GM12878 (cell line): ENCODE measurements at regions of chr1 and their contacts with region 1.

Region 1: DNA sequence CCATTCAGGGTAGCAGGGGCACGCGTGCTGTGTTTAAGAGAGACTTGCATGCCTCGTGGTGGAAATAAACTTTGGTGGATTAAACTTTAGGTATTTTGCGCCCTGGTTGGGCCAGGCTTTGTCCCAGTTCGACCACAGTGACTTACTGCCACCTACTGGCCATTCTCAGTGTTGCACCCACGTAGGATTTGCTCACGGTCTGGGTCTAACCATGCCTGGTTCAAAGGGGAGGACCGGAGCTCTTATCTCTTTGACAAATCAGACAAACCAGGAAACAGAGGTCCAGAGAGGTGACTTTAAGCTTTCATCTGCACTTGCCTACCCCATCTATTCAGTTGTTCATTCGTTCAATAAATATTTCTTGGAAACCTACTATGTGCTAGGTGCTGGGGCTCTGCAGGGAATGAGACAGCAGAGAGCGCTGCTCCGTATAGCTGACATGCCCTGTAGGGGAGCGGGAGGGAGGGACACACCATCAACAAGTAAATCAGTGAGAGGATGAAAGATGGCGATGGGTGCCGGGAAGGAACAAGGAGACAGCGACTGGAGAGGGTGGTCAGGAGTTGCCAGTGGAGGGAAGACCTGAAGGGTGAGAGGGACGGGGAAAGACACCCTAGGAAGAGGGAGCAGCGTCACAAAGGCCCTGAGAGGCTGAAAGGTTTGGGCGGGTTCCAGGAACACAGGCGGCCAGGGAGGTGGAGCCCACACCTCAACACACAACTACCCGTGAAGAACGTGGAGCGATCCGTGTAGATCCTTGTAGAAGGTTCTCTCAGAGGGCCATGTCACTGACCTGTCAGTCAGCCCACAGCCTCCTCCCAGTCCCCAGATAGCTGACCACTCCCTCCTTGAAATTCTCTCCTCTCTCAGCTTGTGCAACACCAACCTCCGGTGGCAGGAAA is 27.2 kb upstream of the TINAGL1 start:
- DNase-seq: peak; percentile 91
- ATAC-seq: peak; percentile 91
- H3K4me3 ChIP-seq: peak overlapping the region; percentile 23; the same call in 1 of the 2 replicates
- H3K27ac ChIP-seq: peak overlapping the region; percentile 33; the same call in 1 of the 2 replicates
- H3K4me1 ChIP-seq: peaks cover 14% of the 10 kb centered on the region
- H3K27me3 ChIP-seq: no peaks in the 10 kb centered on the region
- CTCF ChIP-seq: peak; percentile 80 to 98 (median 92)
- EP300 ChIP-seq: no peak
- POLR2A ChIP-seq: peak; percentile 38; the same call in 1 of the 2 replicates
- RAD21 ChIP-seq: peak; percentile 87

Region 2: DNA sequence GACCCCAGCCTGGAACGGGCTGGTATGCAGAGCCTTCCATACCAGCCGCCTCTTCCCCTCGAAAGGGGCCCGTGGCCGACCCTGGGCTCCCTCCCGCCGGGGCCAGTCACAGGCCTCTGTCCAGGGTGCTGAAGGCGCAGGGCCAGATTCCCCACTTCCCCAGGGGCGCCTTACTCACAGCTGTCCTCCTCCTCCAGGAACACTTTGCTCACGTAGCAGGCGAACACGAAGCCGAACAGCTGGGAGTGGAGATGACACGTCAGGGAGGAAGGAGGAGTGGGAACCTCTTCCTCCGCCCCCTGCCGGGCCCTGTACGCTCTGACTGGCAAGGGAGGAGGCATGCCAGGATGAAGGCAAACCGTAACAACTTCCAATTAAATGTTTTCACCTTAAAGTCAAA is 366.8 kb before region 1 on chr1:
- CTCF ChIA-PET with region 1: interaction called, 27 read pairs
- POLR2A ChIA-PET with region 1: no interaction called
- RAD21 ChIA-PET with region 1: interaction called, 21 read pairs
- SMC1A ChIA-PET with region 1: interaction called, 11 read pairs
- in situ Hi-C with region 1: no loop called
- intact Hi-C with region 1: loop called (anchors 2 kb)
- DNase-seq: no peak
- ATAC-seq: peak; percentile 75
- H3K4me3 ChIP-seq: no peak overlapping the region
- H3K27ac ChIP-seq: no peak overlapping the region
- H3K4me1 ChIP-seq: no peaks in the 10 kb centered on the region
- H3K27me3 ChIP-seq: no peaks in the 10 kb centered on the region; a peak in 3 of 4 replicates
- CTCF ChIP-seq: 0 out of 6 replicates have a peak, but pooled peaks of 1 of the 3 experiments have one; percentile 1
- EP300 ChIP-seq: no peak
- POLR2A ChIP-seq: no peak
- RAD21 ChIP-seq: no peak

Region 3: GRCh38 chr1:31422505-31423319 is 126.4 kb before region 1 on chr1:
- CTCF ChIA-PET with region 1: interaction called, 203 read pairs
- POLR2A ChIA-PET with region 1: interaction called, 16 read pairs
- RAD21 ChIA-PET with region 1: interaction called, 83 read pairs
- SMC1A ChIA-PET with region 1: interaction called, 135 read pairs
- in situ Hi-C with region 1: loop called (anchors 10 kb)
- intact Hi-C with region 1: loop called (anchors 1 kb)
- DNase-seq: peak; percentile 47
- ATAC-seq: peak; percentile 71
- H3K4me3 ChIP-seq: peak overlapping the region; percentile 29; the same call in 1 of the 2 replicates
- H3K27ac ChIP-seq: no peak overlapping the region
- H3K4me1 ChIP-seq: peaks cover 11% of the 10 kb centered on the region
- H3K27me3 ChIP-seq: no peaks in the 10 kb centered on the region
- CTCF ChIP-seq: peak; percentile 94 to 96 (median 95)
- EP300 ChIP-seq: no peak
- POLR2A ChIP-seq: no peak
- RAD21 ChIP-seq: peak; percentile 80

Region 4: GRCh38 chr1:31476891-31477828 is 72.0 kb before region 1 on chr1:
- CTCF ChIA-PET with region 1: interaction called, 19 read pairs
- POLR2A ChIA-PET with region 1: interaction called, 9 read pairs
- RAD21 ChIA-PET with region 1: interaction called, 19 read pairs
- SMC1A ChIA-PET with region 1: interaction called, 30 read pairs
- in situ Hi-C with region 1: no loop called
- intact Hi-C with region 1: loop called (anchors 2 kb)
- DNase-seq: peak; percentile 77
- ATAC-seq: peak; percentile 89
- H3K4me3 ChIP-seq: no peak overlapping the region
- H3K27ac ChIP-seq: no peak overlapping the region
- H3K4me1 ChIP-seq: no peaks in the 10 kb centered on the region
- H3K27me3 ChIP-seq: no peaks in the 10 kb centered on the region
- CTCF ChIP-seq: no peak
- EP300 ChIP-seq: 0 out of 4 replicates have a peak, but pooled peaks of 1 of the 2 experiments have one; percentile 23
- POLR2A ChIP-seq: no peak
- RAD21 ChIP-seq: no peak

Region 5: GRCh38 chr1:31531177-31531999 is 17.8 kb before region 1 on chr1:
- CTCF ChIA-PET with region 1: interaction called, 17 read pairs
- POLR2A ChIA-PET with region 1: interaction called, 5 read pairs
- RAD21 ChIA-PET with region 1: interaction called, 4 read pairs
- SMC1A ChIA-PET with region 1: interaction called, 9 read pairs
- in situ Hi-C with region 1: no loop called
- intact Hi-C with region 1: no loop called
- DNase-seq: no peak
- ATAC-seq: no peak
- H3K4me3 ChIP-seq: no peak overlapping the region
- H3K27ac ChIP-seq: no peak overlapping the region
- H3K4me1 ChIP-seq: no peaks in the 10 kb centered on the region
- H3K27me3 ChIP-seq: no peaks in the 10 kb centered on the region; a peak in 1 of 4 replicates
- CTCF ChIP-seq: no peak
- EP300 ChIP-seq: no peak
- POLR2A ChIP-seq: no peak
- RAD21 ChIP-seq: no peak

Region 6: GRCh38 chr1:31605908-31606427 is 56.8 kb after region 1 on chr1:
- CTCF ChIA-PET with region 1: interaction called, 12 read pairs
- POLR2A ChIA-PET with region 1: no interaction called
- RAD21 ChIA-PET with region 1: interaction called, 8 read pairs
- SMC1A ChIA-PET with region 1: interaction called, 8 read pairs
- in situ Hi-C with region 1: no loop called
- intact Hi-C with region 1: no loop called
- DNase-seq: peak; percentile 96
- ATAC-seq: peak; percentile 98
- H3K4me3 ChIP-seq: no peak overlapping the region
- H3K27ac ChIP-seq: peak overlapping the region; percentile 47
- H3K4me1 ChIP-seq: peaks cover 11% of the 10 kb centered on the region
- H3K27me3 ChIP-seq: no peaks in the 10 kb centered on the region
- CTCF ChIP-seq: no peak
- EP300 ChIP-seq: peak; percentile 92 to 98
- POLR2A ChIP-seq: no peak
- RAD21 ChIP-seq: no peak